ENCODE measurements at regions of chr6 and their contacts with region 1.

Region 1: DNA sequence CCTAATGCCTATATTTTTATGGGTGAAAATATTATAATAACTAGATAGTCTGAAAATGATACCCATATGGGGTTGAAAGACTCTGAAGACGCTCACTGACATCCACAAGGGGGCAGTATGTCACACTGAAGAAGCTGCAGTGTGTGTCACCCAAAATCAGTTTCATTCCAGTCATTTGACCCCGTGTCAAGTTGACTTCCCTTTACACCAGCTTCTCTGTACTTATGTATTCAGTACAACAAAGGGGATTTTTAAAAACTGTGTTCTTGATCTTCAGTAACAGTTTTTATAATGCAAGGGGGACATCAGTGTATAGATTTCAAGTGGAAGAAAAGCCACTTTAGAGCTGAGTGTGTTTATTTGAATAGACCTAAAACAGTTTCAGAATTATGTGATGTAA is 19.3 kb downstream of the FAXC start:
- DNase-seq: peak; percentile 57
- H3K4me3 ChIP-seq: no peak overlapping the region
- H3K27ac ChIP-seq: no peak overlapping the region
- H3K4me1 ChIP-seq: no peaks in the 10 kb centered on the region
- H3K27me3 ChIP-seq: peaks cover 0 to 2% of the 10 kb centered on the region in 2 experiments
- CTCF ChIP-seq: peak; percentile 74 to 81
- POLR2A ChIP-seq: no peak

Region 2: DNA sequence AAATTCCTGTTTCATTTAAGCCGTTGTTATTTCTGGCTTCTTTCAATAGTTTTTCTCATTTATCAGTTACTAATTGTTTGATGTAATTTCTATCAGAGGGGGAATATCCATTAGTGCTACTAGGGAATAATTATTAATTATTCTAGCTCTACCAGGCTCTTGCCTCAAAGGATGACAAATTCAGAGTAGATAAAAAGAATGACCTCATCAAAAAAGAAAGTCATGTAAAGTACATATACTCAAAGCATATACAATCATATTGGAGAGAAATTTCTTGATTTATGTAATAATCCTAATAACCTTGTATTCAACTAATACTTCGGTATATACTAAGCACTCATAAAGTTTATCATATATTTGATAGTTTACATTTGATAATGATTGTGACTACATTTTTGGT is 282.7 kb before region 1 on chr6:
- CTCF ChIA-PET with region 1: no interaction called
- POLR2A ChIA-PET with region 1: no interaction called
- dilution Hi-C with region 1: no loop called
- intact Hi-C with region 1: no loop called
- DNase-seq: no peak
- H3K4me3 ChIP-seq: no peak overlapping the region
- H3K27ac ChIP-seq: no peak overlapping the region
- H3K4me1 ChIP-seq: no peaks in the 10 kb centered on the region
- H3K27me3 ChIP-seq: no peaks in the 10 kb centered on the region
- CTCF ChIP-seq: no peak
- POLR2A ChIP-seq: no peak

Region 3: DNA sequence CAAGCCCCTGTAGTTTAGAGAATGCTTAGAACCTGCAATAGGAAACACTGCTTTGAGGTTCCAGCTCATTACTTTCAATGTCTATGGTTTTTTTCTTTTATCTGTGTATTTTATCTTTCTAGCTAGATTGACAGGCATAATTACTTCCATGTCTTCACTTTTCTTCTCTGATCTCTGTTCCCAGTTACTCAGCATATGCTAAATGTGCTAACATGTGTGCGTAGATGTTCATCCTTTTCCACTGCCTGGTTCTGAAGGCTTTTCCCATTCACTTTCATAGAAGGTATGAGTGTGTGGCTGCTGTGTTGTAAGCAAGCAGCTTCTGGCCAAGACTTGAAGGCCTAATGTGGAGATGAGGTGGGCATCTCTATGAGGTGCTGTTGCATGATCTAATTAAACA is 19.6 kb before region 1 on chr6:
- CTCF ChIA-PET with region 1: interaction called, 28 read pairs
- POLR2A ChIA-PET with region 1: no interaction called
- dilution Hi-C with region 1: no loop called
- intact Hi-C with region 1: no loop called
- DNase-seq: no peak
- H3K4me3 ChIP-seq: no peak overlapping the region
- H3K27ac ChIP-seq: no peak overlapping the region
- H3K4me1 ChIP-seq: no peaks in the 10 kb centered on the region
- H3K27me3 ChIP-seq: no peaks in the 10 kb centered on the region
- CTCF ChIP-seq: no peak
- POLR2A ChIP-seq: no peak

Region 4: DNA sequence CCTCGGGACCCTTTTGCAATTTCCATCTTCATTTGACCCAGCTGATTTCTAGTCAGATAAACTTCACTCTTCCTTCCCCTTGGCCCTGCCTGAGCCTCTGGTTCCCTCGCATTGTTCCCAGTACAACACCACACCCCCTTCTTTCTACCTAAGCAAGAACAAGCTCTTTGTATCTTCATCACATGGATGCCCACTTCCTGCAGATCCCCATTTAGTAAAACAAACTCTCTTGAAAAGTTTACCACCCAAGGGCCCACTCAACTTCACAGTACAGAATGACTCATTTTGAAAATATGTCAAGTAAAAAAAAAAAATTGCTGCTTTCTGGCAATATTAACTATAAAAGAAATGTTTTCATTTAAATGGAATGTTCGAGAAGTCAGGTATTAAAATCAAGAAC is 14.1 kb after region 1 on chr6:
- CTCF ChIA-PET with region 1: interaction called, 40 read pairs
- POLR2A ChIA-PET with region 1: no interaction called
- dilution Hi-C with region 1: no loop called
- intact Hi-C with region 1: no loop called
- DNase-seq: no peak
- H3K4me3 ChIP-seq: no peak overlapping the region
- H3K27ac ChIP-seq: no peak overlapping the region
- H3K4me1 ChIP-seq: peaks cover 16% of the 10 kb centered on the region
- H3K27me3 ChIP-seq: peaks cover 0 to 4% of the 10 kb centered on the region in 2 experiments
- CTCF ChIP-seq: no peak
- POLR2A ChIP-seq: no peak

Region 5: DNA sequence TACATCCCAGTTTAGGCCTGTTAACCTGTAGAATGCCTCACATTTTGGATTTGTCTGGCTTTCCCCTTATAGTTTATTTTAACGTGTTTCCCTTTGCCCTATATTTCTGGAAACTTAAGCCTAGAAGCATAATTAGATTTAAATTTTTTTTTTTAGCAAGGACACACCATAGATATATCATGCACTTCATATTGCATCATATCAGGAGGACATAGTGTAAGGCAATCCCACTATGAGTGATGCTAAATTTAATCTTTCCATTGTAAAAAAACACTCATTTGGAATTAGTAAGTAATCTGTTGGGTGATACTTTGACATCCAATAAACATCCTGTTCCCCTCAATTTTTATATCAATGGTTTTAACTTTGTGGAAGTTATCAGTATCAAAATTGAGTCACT is 29.6 kb after region 1 on chr6:
- CTCF ChIA-PET with region 1: interaction called, 10 read pairs
- POLR2A ChIA-PET with region 1: no interaction called
- dilution Hi-C with region 1: no loop called
- intact Hi-C with region 1: no loop called
- DNase-seq: no peak
- H3K4me3 ChIP-seq: no peak overlapping the region
- H3K27ac ChIP-seq: no peak overlapping the region
- H3K4me1 ChIP-seq: no peaks in the 10 kb centered on the region
- H3K27me3 ChIP-seq: peaks cover 7 to 30% of the 10 kb centered on the region in 2 experiments
- CTCF ChIP-seq: no peak
- POLR2A ChIP-seq: no peak

Region 6: DNA sequence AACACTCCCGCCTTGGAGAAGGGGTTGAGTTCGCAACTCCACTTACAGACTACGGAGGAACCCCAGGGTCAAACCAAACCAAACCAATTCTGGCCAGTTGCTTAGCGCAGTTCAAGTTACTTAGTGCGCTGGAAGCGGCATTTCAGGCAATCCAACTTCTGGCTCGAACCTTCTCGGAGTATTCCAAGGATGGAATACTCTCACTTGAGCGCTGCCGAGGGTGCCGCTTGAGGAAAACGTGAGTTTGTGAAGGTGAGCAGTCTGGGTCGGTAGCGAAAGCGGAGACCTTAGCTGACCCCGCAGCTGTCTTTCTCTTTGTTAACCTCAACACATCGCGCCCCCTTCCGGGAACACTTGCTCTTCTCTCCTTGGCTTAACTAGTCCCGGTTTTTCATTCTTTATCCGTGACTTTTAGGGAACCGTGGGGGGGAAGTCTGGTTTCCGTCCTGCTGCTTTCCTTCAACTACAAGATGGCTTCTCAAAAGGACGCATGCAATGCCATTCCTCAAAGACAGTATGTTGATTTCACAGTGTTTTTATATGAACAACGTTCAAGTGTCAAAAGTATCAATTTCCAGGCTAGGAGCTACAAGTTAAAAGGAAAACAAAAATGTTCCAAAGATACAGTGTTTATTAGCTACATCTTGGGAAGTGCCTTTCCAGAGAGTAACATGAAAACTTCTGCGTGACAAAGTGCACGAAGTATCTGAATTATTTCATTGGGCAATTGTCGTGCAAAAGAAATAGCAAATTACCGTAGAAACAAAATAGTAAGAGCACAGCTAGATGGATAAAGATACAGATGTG is 95.7 kb after region 1 on chr6:
- CTCF ChIA-PET with region 1: interaction called, 23 read pairs
- POLR2A ChIA-PET with region 1: no interaction called
- dilution Hi-C with region 1: no loop called
- intact Hi-C with region 1: loop called (anchors 1 kb)
- DNase-seq: peak; percentile 83
- H3K4me3 ChIP-seq: peak overlapping the region; percentile 46 to 92 (median 91)
- H3K27ac ChIP-seq: peak overlapping the region; percentile 94
- H3K4me1 ChIP-seq: peaks cover 26% of the 10 kb centered on the region
- H3K27me3 ChIP-seq: no peaks in the 10 kb centered on the region
- CTCF ChIP-seq: peak; percentile 20 to 35
- POLR2A ChIP-seq: no peak

Region 7: GRCh38 chr6:99822741-99823512 is 492.8 kb after region 1 on chr6:
- CTCF ChIA-PET with region 1: interaction called, 18 read pairs
- POLR2A ChIA-PET with region 1: no interaction called
- dilution Hi-C with region 1: no loop called
- intact Hi-C with region 1: no loop called
- DNase-seq: peak; percentile 49
- H3K4me3 ChIP-seq: no peak overlapping the region
- H3K27ac ChIP-seq: no peak overlapping the region
- H3K4me1 ChIP-seq: no peaks in the 10 kb centered on the region
- H3K27me3 ChIP-seq: peaks cover 0 to 3% of the 10 kb centered on the region in 2 experiments
- CTCF ChIP-seq: peak; percentile 9 to 14
- POLR2A ChIP-seq: no peak

Measured in endothelial cell of umbilical vein (primary cell).